Right ventricle myocardium inferior (tissue), 1 donor: ENCODE measurements at regions of chr10 and their contacts with region 1.

Region 1: GRCh38 chr10:35336084-35336831 is at the start of gene CCNY:
- DNase-seq: peak; percentile 94
- ATAC-seq: peak; percentile 94
- total RNA-seq, gene CCNY: 91.8 TPM

Region 2: GRCh38 chr10:35126530-35127296 is 209.5 kb before region 1 on chr10 and contains the start of gene CREM:
- intact Hi-C with region 1: loop called (anchors 10 kb)
- DNase-seq: peak; percentile 99
- ATAC-seq: peak; percentile 98
- total RNA-seq, gene CREM: 63.7 TPM

Region 3: GRCh38 chr10:35300063-35300699 is 36.1 kb before region 1 on chr10:
- intact Hi-C with region 1: no loop called
- DNase-seq: no peak
- ATAC-seq: no peak

Region 4: DNA sequence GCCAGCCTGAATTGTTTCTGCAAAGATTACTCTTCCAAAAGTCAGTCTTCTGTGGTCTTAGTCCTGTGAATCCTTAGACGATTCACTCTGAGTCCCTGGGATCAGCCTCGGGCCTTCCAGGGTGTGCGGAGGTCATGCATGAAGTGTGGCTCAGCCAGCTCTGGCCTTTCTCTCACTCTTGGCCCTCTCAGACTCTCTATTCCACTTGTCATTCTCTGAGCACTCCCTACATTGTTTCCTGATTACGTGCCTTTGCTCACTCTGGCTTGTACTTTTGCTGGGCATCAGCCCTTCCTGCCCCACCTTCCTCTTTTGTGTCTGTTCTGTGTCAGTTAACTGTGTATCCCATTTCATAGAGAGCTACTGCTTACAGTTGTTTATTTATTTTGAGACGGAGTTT is 36.1 kb after region 1 on chr10:
- intact Hi-C with region 1: loop called (anchors 5 kb)
- DNase-seq: peak; percentile 65
- ATAC-seq: peak; percentile 94

Region 5: DNA sequence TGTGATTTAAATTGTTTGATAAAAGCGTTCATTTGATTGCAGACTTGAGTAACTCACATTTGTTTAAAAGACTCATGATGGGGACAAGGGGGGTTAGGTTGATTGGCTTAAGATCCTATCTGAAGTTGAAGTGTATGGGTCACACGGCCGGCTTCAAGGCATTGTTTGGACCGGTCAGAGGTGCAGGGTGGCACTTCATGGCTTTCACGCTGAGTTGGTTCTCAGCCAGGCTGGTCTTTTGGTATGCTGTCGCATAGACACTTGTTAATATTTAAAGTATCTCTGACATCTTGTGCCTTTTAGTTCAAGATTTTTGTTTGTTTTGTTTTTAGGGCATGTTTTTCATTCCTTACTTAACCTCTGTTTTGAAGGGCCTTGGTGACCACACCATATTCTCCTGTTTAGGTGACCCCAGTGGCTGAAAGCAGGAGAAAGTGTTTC is 58.2 kb after region 1 on chr10:
- intact Hi-C with region 1: loop called (anchors 5 kb)
- DNase-seq: no peak
- ATAC-seq: no peak

Region 6: GRCh38 chr10:35462491-35462934 is 126.3 kb after region 1 on chr10:
- intact Hi-C with region 1: loop called (anchors 2 kb)
- DNase-seq: no peak
- ATAC-seq: peak; percentile 64

Region 7: GRCh38 chr10:35563261-35563891 is 227.1 kb after region 1 on chr10:
- intact Hi-C with region 1: loop called (anchors 2 kb)
- DNase-seq: no peak
- ATAC-seq: peak; percentile 49

Region 8: GRCh38 chr10:35626971-35627507 is 290.8 kb after region 1 on chr10:
- intact Hi-C with region 1: no loop called
- DNase-seq: no peak
- ATAC-seq: no peak